Calu3 (cell line): ENCODE measurements at regions of chr1 and their contacts with region 1.

Region 1: GRCh38 chr1:220776720-220777326 is 9.9 kb upstream of the MTARC1 start:
- DNase-seq: peak; percentile 93
- H3K4me3 Mint-ChIP-seq: no peak overlapping the region
- H3K27ac Mint-ChIP-seq: no peak overlapping the region
- H3K4me1 Mint-ChIP-seq: no peaks in the 10 kb centered on the region
- H3K27me3 Mint-ChIP-seq: no peaks in the 10 kb centered on the region
- CTCF ChIP-seq: peak; percentile 89

Region 2: GRCh38 chr1:220046052-220046930 is 730.5 kb before region 1 on chr1 and contains the start of gene EPRS1:
- CTCF ChIA-PET with region 1: no interaction called
- intact Hi-C with region 1: no loop called
- DNase-seq: peak; percentile 97
- H3K4me3 Mint-ChIP-seq: peak within 1 kb of the TSS; percentile 97
- H3K27ac Mint-ChIP-seq: peak within 1 kb of the TSS; percentile 99
- H3K4me1 Mint-ChIP-seq: peaks cover 10% of the 10 kb centered on the region
- H3K27me3 Mint-ChIP-seq: no peaks in the 10 kb centered on the region
- CTCF ChIP-seq: peak; percentile 63
- total RNA-seq, gene EPRS1: 143 and 155 TPM in 2 replicates

Region 3: DNA sequence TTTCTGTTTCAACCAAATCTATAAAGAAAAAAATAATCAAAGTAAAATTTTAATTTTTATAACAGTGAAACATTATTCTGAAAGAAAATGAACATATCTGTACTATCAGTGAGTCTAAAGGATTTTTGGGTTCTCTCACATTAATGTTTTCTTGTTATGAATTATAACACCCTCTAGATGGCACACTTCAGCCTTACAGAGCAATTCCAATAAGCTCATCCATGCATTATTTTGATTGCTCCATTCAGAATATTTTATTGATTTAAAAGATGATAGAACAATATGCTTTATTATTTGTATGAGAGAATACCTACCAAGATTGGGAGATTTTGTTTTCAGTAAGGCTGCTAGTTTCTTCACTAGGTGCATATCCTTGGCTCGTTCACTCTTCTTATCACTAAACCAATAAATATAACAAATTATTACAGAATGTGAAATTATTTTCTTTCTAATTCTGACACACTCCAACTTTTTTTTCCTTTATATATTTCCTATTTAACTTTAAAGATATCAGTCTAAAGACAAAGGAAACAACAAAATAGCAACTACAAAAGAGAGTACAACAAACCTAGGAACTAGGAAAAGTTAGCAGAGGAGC is 587.0 kb before region 1 on chr1:
- CTCF ChIA-PET with region 1: interaction called, 3 read pairs
- intact Hi-C with region 1: loop called (anchors 10 kb)
- DNase-seq: no peak
- H3K4me3 Mint-ChIP-seq: no peak overlapping the region
- H3K27ac Mint-ChIP-seq: no peak overlapping the region
- H3K4me1 Mint-ChIP-seq: no peaks in the 10 kb centered on the region
- H3K27me3 Mint-ChIP-seq: no peaks in the 10 kb centered on the region
- CTCF ChIP-seq: peak; percentile 12

Region 4: DNA sequence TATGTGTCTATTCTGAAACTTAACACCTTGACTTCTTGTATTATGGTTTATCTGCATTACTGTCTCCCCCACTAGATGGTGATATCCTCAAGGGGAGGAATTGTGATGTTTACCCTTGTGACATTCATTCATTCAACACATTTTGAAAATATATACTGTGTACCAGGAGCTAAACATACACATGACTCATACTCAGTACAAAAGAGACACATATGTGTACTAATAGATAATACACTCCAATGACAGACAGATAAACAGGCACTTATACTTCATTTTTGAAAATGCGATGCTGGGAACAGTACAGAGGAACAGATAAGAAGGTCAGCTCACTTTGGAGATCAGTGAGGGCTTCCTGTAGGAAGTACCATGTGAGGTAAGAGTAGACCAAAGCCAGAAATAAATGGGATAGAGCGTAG is 495.7 kb before region 1 on chr1:
- CTCF ChIA-PET with region 1: interaction called, 6 read pairs
- intact Hi-C with region 1: loop called (anchors 1 kb)
- DNase-seq: peak; percentile 8
- H3K4me3 Mint-ChIP-seq: no peak overlapping the region
- H3K27ac Mint-ChIP-seq: no peak overlapping the region
- H3K4me1 Mint-ChIP-seq: no peaks in the 10 kb centered on the region
- H3K27me3 Mint-ChIP-seq: peaks cover 8% of the 10 kb centered on the region
- CTCF ChIP-seq: no peak

Region 5: GRCh38 chr1:220544901-220545303 is 231.9 kb before region 1 on chr1:
- CTCF ChIA-PET with region 1: no interaction called
- intact Hi-C with region 1: loop called (anchors 10 kb)
- DNase-seq: peak; percentile 12
- H3K4me3 Mint-ChIP-seq: no peak overlapping the region
- H3K27ac Mint-ChIP-seq: no peak overlapping the region
- H3K4me1 Mint-ChIP-seq: no peaks in the 10 kb centered on the region
- H3K27me3 Mint-ChIP-seq: peaks cover 5% of the 10 kb centered on the region
- CTCF ChIP-seq: no peak

Region 6: GRCh38 chr1:220803401-220804201 is 26.8 kb after region 1 on chr1:
- CTCF ChIA-PET with region 1: no interaction called
- intact Hi-C with region 1: loop called (anchors 1 kb)
- DNase-seq: peak; percentile 59
- H3K4me3 Mint-ChIP-seq: no peak overlapping the region
- H3K27ac Mint-ChIP-seq: no peak overlapping the region
- H3K4me1 Mint-ChIP-seq: no peaks in the 10 kb centered on the region
- H3K27me3 Mint-ChIP-seq: no peaks in the 10 kb centered on the region
- CTCF ChIP-seq: peak; percentile 71